PC-9 (cell line): ENCODE measurements at regions of chr14 and their contacts with region 1.

Region 1: DNA sequence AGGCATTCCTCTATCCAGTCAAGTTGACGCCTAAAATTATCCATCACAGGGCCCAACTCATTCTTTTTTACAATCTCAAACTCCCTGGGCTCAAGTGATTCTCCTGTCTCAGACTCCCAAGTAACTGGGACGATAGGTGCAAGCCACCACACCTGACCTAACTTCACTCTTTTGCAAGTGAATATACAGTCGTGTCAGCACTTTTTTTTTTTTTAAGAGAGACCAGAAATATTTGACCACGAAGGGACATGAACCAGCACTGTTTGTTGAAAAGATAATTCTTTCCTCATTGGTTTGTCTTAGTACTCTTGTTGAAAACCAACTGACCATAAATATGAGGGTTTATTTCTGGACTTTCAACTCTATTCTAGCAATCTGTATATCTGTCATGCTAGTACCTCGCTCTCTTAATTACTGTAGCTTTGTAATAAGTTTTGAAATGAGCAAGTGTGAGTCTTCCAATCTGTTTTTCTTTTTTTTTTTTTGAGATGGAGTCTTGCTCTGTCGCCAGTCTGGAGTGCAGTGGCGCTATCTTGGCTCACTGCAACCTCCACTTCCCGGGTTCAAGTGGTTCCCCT is 14.0 kb downstream of the PTGR2 start:
- DNase-seq: no peak
- H3K4me3 ChIP-seq: no peak overlapping the region
- H3K27ac ChIP-seq: no peak overlapping the region
- H3K4me1 ChIP-seq: no peaks in the 10 kb centered on the region
- H3K27me3 ChIP-seq: no peaks in the 10 kb centered on the region
- CTCF ChIP-seq: no peak

Region 2: GRCh38 chr14:73613046-73613383 is 252.6 kb before region 1 on chr14:
- CTCF ChIA-PET with region 1: no interaction called
- POLR2A ChIA-PET with region 1: no interaction called
- intact Hi-C with region 1: no loop called
- DNase-seq: no peak
- H3K4me3 ChIP-seq: peak overlapping the region; percentile 60; the same call in 1 of the 2 replicates
- H3K27ac ChIP-seq: no peak overlapping the region
- H3K4me1 ChIP-seq: peaks cover 29% of the 10 kb centered on the region
- H3K27me3 ChIP-seq: no peaks in the 10 kb centered on the region
- CTCF ChIP-seq: no peak

Region 3: DNA sequence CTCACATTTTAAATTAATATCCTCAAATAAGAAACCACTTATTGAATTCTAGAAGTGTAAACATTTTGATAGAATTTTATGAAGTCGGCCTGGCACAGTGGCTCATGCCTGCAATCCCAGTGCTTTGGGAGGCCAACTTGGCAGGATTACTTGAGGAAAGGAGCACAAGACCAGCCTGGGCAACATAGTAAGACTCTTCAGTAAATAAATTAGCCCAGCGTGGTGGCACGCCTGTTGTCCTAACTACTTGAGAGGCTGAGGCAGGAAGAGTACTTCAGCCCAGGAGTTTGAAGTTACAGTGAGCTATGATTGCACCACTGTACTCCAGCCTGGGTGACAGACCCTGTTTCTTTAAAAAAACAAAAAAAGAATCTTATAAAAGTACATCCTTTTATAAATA is 12.2 kb after region 1 on chr14:
- CTCF ChIA-PET with region 1: interaction called, 11 read pairs
- POLR2A ChIA-PET with region 1: interaction called, 7 read pairs
- intact Hi-C with region 1: no loop called
- DNase-seq: no peak
- H3K4me3 ChIP-seq: no peak overlapping the region
- H3K27ac ChIP-seq: no peak overlapping the region
- H3K4me1 ChIP-seq: no peaks in the 10 kb centered on the region
- H3K27me3 ChIP-seq: no peaks in the 10 kb centered on the region
- CTCF ChIP-seq: no peak